Cardiac septum (tissue), 1 donor: ENCODE measurements at regions of chr17 and their contacts with region 1.

Region 1: DNA sequence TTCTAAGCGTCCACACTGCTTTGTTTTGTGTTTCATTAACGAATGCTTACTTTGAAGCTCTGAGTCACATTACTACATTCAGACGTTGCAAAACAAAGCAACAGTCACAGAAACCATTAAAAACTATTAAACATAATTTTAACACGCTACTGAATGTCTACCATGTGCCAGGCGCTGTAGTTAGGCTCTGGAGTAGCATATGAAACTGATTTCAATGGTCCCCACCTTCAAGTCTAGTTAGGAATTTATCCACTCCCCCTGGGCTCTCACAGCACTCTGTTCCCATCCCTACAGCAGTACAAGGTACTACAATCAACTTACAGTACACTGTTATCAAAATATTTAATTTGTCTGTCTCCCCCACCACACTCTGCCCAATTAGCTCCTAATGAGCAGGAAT is 631 bp downstream of the UTP6 start:
- DNase-seq: no peak

Region 2: GRCh38 chr17:31472137-31472536 is 428.7 kb before region 1 on chr17:
- intact Hi-C with region 1: no loop called
- DNase-seq: no peak

Region 3: GRCh38 chr17:31858642-31859473 is 42.0 kb before region 1 on chr17 and contains the start of gene COPRS:
- intact Hi-C with region 1: loop called (anchors 5 kb)
- DNase-seq: peak; percentile 97
- total RNA-seq, gene COPRS: 51.9 TPM